ENCODE measurements at regions of chr3 and their contacts with region 1.

Region 1: DNA sequence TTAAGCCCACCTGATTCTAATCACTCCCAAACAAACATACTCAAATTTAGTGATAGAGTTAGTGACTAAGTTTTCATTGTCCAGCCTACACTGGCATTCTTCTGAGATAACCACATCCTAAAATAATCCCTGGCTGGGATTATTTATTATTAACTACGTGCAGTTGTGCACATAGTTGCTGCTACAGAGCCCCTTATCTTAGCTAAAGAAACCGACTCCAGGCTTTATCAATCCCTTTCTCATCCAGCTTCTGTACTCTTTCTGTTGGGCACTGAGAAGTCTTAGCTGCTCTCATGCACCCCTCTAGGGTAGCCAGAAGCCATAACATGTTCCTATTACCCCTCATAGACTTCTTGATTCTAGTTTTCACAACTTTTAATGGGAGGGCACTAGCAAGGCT is 208.7 kb downstream of the MBNL1 start:
- DNase-seq: no peak
- ATAC-seq: peak in 1 of 2 donors; percentile 3
- H3K4me3 ChIP-seq: no peak overlapping the region
- H3K27ac ChIP-seq: no peak overlapping the region
- H3K4me1 ChIP-seq: no peaks in the 10 kb centered on the region
- H3K27me3 ChIP-seq: no peaks in the 10 kb centered on the region
- CTCF ChIP-seq: no peak
- POLR2A ChIP-seq: no peak

Region 2: DNA sequence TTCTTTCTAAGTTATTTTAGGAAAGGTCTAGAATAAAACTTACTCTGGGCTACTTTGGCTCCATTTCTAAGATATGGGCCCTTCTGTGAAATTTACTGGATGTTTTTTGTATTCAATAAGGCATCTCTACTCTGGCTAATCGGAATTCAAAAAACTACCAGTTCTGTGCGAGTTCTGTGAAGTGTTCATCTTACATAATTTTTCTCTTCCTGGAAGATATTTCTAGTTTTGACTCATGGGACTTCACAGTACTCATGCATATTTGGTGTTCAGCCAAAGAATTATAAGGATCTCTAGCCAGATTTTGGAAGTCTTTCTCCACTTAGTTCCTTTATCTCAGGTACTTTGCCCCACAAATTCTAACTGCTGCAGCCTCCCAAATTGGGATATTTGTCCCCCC is 255.1 kb before region 1 on chr3:
- in situ Hi-C with region 1: no loop called
- intact Hi-C with region 1: no loop called
- DNase-seq: no peak
- ATAC-seq: peak in 1 of 2 donors; percentile 37
- H3K4me3 ChIP-seq: no peak overlapping the region
- H3K27ac ChIP-seq: peak overlapping the region; percentile 34 to 58 (median 38)
- H3K4me1 ChIP-seq: peaks cover 33 to 35% of the 10 kb centered on the region in 2 donors
- H3K27me3 ChIP-seq: no peaks in the 10 kb centered on the region
- CTCF ChIP-seq: no peak
- POLR2A ChIP-seq: no peak

Region 3: DNA sequence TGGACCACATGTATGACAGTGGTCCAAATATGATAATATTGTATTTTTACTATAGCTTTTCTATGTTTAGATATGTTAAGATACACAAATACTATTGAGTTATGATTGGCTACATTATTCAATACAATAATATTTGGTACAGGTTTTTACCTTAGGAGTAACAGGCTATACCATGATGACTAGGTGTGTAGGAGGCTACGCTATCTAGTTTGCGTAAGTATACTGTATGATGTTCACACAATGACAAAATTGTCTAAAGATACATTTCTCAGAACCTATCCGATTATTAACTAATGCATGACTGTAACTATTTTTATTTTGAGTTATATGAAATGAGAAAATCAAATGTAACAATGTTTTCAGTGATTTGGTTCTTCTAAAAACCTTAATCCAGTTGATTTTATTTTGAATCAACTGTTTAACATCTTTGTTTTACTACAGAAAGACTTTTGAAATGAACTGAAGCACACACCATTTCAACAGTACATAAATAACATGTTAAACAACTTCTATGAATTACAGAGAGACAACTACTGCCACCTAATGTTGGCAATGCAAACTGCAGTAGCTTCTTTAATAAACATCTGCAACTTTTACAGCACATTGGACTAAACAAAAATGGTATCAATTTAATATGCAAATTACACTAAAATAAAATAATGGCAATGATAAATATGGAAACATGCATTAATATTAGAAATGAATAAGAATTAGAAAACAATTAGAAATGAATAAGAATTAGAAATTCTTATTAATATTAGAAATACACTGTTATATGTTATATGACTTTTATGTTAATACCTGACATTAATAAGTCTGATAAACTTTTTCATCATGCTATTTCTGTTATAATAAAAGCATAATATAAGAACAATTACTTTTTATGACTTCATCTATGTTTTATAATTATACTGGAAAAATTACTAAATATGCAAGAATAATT is 47.0 kb after region 1 on chr3:
- in situ Hi-C with region 1: no loop called
- intact Hi-C with region 1: loop called (anchors 5 kb)
- DNase-seq: no peak
- ATAC-seq: peak; percentile 31 to 79
- H3K4me3 ChIP-seq: no peak overlapping the region
- H3K27ac ChIP-seq: no peak overlapping the region
- H3K4me1 ChIP-seq: no peaks in the 10 kb centered on the region
- H3K27me3 ChIP-seq: no peaks in the 10 kb centered on the region
- CTCF ChIP-seq: peak; percentile 64 to 89 (median 79)
- POLR2A ChIP-seq: no peak

Region 4: DNA sequence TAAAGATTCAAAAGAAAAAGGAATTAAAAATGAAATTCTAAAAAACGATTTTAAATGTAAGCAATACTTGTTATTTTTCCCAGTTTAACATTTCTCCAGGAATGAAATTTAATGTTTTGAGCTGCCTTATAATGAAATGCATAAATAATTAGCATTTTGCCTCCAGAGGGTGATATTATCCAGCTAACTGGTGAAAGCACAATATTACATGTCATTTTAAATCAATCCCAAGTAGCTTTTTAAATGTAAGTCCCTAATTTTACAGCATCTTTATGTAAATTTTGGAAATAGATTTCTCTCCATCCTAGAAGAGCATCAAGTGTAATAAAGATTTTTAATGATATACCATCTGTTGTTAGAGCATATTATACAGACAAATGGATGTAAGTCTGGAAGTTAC is 218.4 kb after region 1 on chr3:
- in situ Hi-C with region 1: no loop called
- intact Hi-C with region 1: no loop called
- DNase-seq: no peak
- ATAC-seq: no peak
- H3K4me3 ChIP-seq: no peak overlapping the region
- H3K27ac ChIP-seq: no peak overlapping the region
- H3K4me1 ChIP-seq: no peaks in the 10 kb centered on the region
- H3K27me3 ChIP-seq: no peaks in the 10 kb centered on the region
- CTCF ChIP-seq: no peak
- POLR2A ChIP-seq: no peak